ENCODE measurements at regions of chr9 and their contacts with region 1.

Region 1: GRCh38 chr9:109574068-109574882 is 76.2 kb upstream of the PTPN3 start:
- DNase-seq: peak; percentile 14 to 24
- H3K4me3 ChIP-seq: no peak overlapping the region
- H3K27ac ChIP-seq: no peak overlapping the region
- H3K4me1 ChIP-seq: no peaks in the 10 kb centered on the region
- H3K27me3 ChIP-seq: no peaks in the 10 kb centered on the region
- CTCF ChIP-seq: peak; percentile 17 to 90 (median 66)
- POLR2A ChIP-seq: no peak

Region 2: GRCh38 chr9:109817846-109818472 is 243.7 kb after region 1 on chr9:
- intact Hi-C with region 1: loop called (anchors 5 kb)
- DNase-seq: peak; percentile 73 to 76
- H3K4me3 ChIP-seq: no peak overlapping the region
- H3K27ac ChIP-seq: no peak overlapping the region
- H3K4me1 ChIP-seq: peaks cover 0 to 10% of the 10 kb centered on the region in 2 donors
- H3K27me3 ChIP-seq: no peaks in the 10 kb centered on the region
- CTCF ChIP-seq: peak; percentile 58 to 94 (median 92)
- POLR2A ChIP-seq: no peak

Region 3: GRCh38 chr9:110220809-110221208 is 646.5 kb after region 1 on chr9:
- intact Hi-C with region 1: no loop called
- DNase-seq: no peak
- H3K4me3 ChIP-seq: no peak overlapping the region
- H3K27ac ChIP-seq: no peak overlapping the region
- H3K4me1 ChIP-seq: no peaks in the 10 kb centered on the region
- H3K27me3 ChIP-seq: no peaks in the 10 kb centered on the region
- CTCF ChIP-seq: no peak
- POLR2A ChIP-seq: no peak